ENCODE measurements at regions of chr10 and their contacts with region 1.

Region 1: DNA sequence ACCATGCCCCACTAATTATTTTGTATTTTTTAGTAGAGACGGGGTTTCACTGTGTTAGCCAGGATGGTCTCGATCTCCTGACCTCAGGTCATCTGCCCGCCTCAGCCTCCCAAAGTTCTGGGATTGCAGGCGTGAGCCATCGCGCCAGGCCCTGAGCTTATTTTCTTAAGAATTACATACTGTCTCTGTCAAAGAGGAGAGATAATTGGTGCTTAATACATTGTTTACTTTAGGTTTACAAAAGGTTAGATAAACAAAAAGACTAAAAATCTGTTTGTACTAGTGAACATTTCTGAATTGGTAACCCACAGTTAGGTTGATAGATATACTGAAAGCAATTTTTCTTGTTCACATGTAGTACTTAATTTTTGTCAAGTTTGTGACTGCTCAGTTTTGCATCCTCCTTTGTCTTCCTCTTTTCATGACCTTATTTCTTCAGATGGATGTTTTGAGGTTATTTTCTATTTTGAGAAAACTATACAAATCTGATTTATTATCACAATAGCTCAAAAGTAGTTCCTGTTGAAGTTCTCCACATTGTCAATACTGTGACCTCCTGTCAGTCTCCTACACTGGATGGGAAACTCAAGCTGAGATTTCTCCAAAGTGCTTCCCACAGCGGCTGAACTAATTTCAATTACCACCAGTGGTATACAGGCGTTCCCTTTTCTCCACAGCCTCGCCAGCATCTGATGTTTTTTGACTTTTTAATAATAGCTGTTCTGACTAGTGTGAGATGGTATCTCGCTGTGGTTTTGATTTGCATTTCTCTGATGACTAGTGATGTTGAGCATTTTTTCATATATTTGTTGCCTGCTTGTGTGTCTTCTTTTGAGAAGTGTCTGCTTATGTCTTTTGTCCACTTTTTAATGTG is 22.5 kb downstream of the HHEX start:
- DNase-seq: peak; percentile 79
- ATAC-seq: peak; percentile 73
- H3K4me3 ChIP-seq: peak overlapping the region in 3 of 5 experiments; percentile 12 to 37 (median 27)
- H3K4me3 Mint-ChIP-seq: peak overlapping the region; percentile 76
- H3K27ac ChIP-seq: peak overlapping the region; percentile 73 to 74
- H3K27ac Mint-ChIP-seq: peak overlapping the region; percentile 95
- H3K4me1 ChIP-seq: peaks cover 54 to 61% of the 10 kb centered on the region in 2 donors
- H3K4me1 Mint-ChIP-seq: peaks cover 60% of the 10 kb centered on the region
- H3K27me3 ChIP-seq: no peaks in the 10 kb centered on the region
- H3K27me3 Mint-ChIP-seq: no peaks in the 10 kb centered on the region
- CTCF ChIP-seq: no peak

Region 2: GRCh38 chr10:92530421-92530820 is 181.8 kb before region 1 on chr10:
- CTCF ChIA-PET with region 1: no interaction called
- POLR2A ChIA-PET with region 1: no interaction called
- intact Hi-C with region 1: no loop called
- DNase-seq: no peak
- ATAC-seq: no peak
- H3K4me3 ChIP-seq: no peak overlapping the region
- H3K4me3 Mint-ChIP-seq: no peak overlapping the region
- H3K27ac ChIP-seq: no peak overlapping the region
- H3K27ac Mint-ChIP-seq: no peak overlapping the region
- H3K4me1 ChIP-seq: no peaks in the 10 kb centered on the region
- H3K4me1 Mint-ChIP-seq: no peaks in the 10 kb centered on the region
- H3K27me3 ChIP-seq: no peaks in the 10 kb centered on the region
- H3K27me3 Mint-ChIP-seq: no peaks in the 10 kb centered on the region
- CTCF ChIP-seq: no peak

Region 3: DNA sequence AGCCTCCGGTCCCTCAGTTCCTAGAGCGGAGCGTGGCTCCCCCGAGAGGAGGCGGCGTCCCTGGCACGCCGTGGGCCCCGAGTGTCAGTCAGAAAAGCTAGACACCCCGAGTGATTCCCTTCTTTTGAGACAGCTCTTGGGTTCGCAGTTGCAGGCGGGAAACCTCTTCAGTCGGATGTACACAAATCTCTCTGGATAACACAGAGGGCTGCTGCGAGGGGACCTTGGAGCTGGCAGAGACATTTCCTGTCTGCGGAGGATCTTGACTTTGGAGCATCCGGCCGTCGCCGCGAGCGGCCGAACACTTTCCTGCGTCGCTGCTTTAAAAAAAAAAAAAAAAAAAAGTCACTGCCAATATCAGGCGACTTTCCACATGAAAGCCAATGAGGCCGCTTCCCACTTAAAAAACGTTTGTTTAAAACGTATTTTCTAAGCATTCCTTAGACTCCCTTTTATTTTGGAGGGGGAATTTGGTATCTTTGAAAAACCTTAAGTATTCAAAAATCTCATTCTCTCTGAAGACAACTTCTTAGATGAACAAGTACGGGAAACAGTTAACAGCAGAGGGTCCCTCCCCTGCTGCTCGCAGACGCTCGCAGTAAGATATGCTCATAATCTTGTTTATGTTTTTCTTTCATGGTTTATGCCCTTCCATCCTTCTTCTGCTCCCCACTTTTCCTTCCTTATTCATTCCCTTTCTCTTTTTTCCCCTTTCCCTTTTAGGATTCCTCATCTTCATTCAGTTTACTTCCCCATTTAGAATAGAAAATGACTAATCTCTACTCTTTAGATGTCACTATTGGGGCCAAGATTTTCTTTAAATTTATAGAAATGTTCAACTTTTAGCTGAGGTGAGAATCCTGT is 12.5 kb before region 1 on chr10:
- CTCF ChIA-PET with region 1: interaction called, 4 read pairs
- POLR2A ChIA-PET with region 1: interaction called, 6 read pairs
- intact Hi-C with region 1: loop called (anchors 2 kb)
- DNase-seq: peak; percentile 60
- ATAC-seq: peak; percentile 71
- H3K4me3 ChIP-seq: peak overlapping the region; percentile 49 to 76 (median 62)
- H3K4me3 Mint-ChIP-seq: peak overlapping the region; percentile 82
- H3K27ac ChIP-seq: peak overlapping the region; percentile 45 to 83
- H3K27ac Mint-ChIP-seq: peak overlapping the region; percentile 84
- H3K4me1 ChIP-seq: peaks cover 47 to 58% of the 10 kb centered on the region in 2 donors
- H3K4me1 Mint-ChIP-seq: peaks cover 59% of the 10 kb centered on the region
- H3K27me3 ChIP-seq: no peaks in the 10 kb centered on the region
- H3K27me3 Mint-ChIP-seq: no peaks in the 10 kb centered on the region
- CTCF ChIP-seq: no peak

Region 4: DNA sequence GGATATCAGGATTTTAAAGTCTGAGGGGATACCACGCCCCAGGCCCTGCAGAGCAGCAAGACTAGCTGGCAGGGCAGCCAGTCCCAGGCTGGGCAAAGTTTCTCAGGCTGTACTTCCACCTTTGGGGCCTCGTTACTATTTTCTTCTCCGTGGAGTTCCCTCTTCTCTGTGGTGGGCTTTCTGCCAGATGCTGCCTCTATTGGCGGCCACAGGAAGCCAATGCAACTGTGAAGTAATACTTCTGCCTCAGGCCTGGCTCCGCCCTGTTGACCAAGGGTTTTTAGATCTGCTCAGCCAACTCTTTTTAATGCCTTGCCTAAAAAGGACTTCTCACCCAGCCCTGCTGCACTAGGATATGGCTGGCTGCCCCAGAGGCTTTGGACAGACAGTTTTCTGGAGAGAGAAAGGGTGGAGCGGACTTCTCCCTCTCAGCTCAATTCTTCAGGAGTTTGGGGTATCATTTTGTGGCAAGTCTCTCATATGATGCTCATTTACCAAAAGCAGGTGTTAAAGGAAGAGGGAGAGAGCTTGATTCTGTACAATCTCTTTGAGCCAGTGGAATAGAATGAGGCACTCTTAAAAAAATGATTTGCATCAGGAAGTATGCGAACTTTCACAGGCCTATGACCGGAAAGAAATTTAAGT is 44.9 kb after region 1 on chr10:
- CTCF ChIA-PET with region 1: interaction called, 12 read pairs
- POLR2A ChIA-PET with region 1: interaction called, 14 read pairs
- intact Hi-C with region 1: loop called (anchors 1 kb)
- DNase-seq: peak; percentile 86
- ATAC-seq: peak; percentile 66
- H3K4me3 ChIP-seq: peak overlapping the region; percentile 16 to 36 (median 29)
- H3K4me3 Mint-ChIP-seq: peak overlapping the region; percentile 75
- H3K27ac ChIP-seq: peak overlapping the region; percentile 84 to 87
- H3K27ac Mint-ChIP-seq: peak overlapping the region; percentile 97
- H3K4me1 ChIP-seq: peaks cover 65 to 73% of the 10 kb centered on the region in 2 donors
- H3K4me1 Mint-ChIP-seq: peaks cover 75% of the 10 kb centered on the region
- H3K27me3 ChIP-seq: no peaks in the 10 kb centered on the region
- H3K27me3 Mint-ChIP-seq: no peaks in the 10 kb centered on the region
- CTCF ChIP-seq: peak; percentile 42